Activated CD4-positive, alpha-beta T cell treated with anti-CD3 and anti-CD28 coated beads, Interleukin-2, amount 10 ng/mL, durations not matched to agents 24 days and 14 days (primary cell): ENCODE measurements at regions of chr6 and their contacts with region 1.

Region 1: DNA sequence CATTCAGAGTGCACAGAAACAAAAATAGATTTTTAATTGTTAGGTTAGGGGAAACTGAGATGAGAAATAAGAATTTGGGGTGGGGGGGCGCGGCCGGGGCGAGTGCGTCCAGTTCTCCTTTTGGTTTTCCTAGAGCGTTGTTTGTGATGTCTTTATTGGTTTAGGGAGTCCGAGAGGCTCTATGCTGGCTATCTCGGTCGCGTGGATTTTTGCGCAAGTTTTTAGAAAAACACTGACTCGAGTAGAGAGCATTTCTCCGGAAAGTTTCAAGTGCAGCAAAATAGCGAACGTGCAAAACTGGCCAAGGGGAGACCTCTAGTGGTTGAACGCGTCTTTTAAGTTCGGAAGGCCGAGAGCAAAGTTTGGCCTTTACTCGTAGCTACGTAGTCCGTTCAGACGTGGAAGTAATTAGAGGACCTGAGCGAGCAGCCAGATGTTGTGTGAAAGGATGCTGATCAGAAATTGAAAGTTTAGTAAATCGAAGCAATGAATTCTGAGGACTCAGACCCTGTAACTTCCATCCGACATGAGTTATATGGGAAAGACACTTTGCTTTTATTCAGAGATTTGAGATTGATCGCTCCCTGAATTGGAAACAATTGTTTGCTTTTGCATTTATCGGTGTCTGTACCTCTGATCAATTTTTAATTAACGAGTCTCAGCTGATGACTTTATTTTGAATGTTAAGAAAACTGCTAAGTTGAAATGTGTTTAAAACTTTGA is 2.7 kb downstream of the L3MBTL3 start:
- DNase-seq: peak; percentile 94
- H3K4me3 Mint-ChIP-seq: peak overlapping the region; percentile 95
- H3K27ac Mint-ChIP-seq: peak overlapping the region; percentile 93
- H3K4me1 Mint-ChIP-seq: peaks cover 17% of the 10 kb centered on the region
- H3K27me3 Mint-ChIP-seq: peaks cover 12% of the 10 kb centered on the region

Region 2: GRCh38 chr6:129490521-129491245 is 530.4 kb before region 1 on chr6:
- intact Hi-C with region 1: loop called (anchors 2 kb)
- DNase-seq: peak; percentile 91
- H3K4me3 Mint-ChIP-seq: peak overlapping the region; percentile 84
- H3K27ac Mint-ChIP-seq: peak overlapping the region; percentile 98
- H3K4me1 Mint-ChIP-seq: peaks cover 61% of the 10 kb centered on the region
- H3K27me3 Mint-ChIP-seq: no peaks in the 10 kb centered on the region

Region 3: GRCh38 chr6:129598244-129599187 is 422.6 kb before region 1 on chr6:
- intact Hi-C with region 1: loop called (anchors 2 kb)
- DNase-seq: peak; percentile 84
- H3K4me3 Mint-ChIP-seq: no peak overlapping the region
- H3K27ac Mint-ChIP-seq: no peak overlapping the region
- H3K4me1 Mint-ChIP-seq: peaks cover 1% of the 10 kb centered on the region
- H3K27me3 Mint-ChIP-seq: no peaks in the 10 kb centered on the region

Region 4: DNA sequence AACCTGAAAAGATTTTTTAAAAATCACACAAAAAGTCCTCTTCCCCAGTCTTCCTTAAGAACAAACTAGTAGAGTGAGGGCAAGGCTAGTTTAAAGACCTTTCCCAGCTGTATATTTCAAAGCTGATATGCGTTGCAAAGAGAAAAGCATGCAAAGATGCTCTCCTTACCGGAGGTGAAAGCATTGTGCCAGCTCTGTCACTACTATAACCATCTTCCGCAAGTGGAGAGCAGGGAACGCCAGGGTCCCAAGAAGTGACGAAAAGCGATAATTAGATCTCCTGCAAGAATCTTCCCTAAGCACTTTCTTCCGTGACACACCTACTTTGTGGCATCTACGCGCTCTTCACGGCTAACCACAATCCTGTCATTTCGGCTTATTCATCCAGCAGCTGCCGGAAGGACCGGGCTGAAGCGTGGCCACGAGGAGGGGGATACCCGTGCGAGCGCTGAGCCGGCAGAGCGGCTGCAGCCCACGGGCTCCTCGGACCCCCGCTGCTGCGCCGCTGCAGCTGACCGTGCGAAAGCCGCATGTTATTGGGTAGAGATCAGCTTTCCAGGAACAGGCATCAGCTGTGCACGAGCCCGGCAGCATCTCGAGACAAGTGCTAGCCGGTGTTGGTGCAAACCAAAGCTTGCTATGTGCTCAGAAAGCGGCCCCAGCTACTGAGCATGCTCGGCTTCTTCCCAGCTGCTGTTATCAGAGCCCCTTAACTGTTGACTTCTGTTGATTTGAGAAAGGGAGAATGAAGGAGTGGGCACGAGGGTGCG is 253.9 kb before region 1 on chr6:
- intact Hi-C with region 1: loop called (anchors 5 kb)
- DNase-seq: peak; percentile 89
- H3K4me3 Mint-ChIP-seq: peak overlapping the region; percentile 88
- H3K27ac Mint-ChIP-seq: peak overlapping the region; percentile 81
- H3K4me1 Mint-ChIP-seq: peaks cover 23% of the 10 kb centered on the region
- H3K27me3 Mint-ChIP-seq: peaks cover 65% of the 10 kb centered on the region

Region 5: GRCh38 chr6:129893640-129894039 is 127.4 kb before region 1 on chr6:
- intact Hi-C with region 1: loop called (anchors 1 kb)
- DNase-seq: no peak
- H3K4me3 Mint-ChIP-seq: no peak overlapping the region
- H3K27ac Mint-ChIP-seq: no peak overlapping the region
- H3K4me1 Mint-ChIP-seq: peaks cover 5% of the 10 kb centered on the region
- H3K27me3 Mint-ChIP-seq: peaks cover 3% of the 10 kb centered on the region

Region 6: GRCh38 chr6:129936329-129937165 is 84.5 kb before region 1 on chr6:
- intact Hi-C with region 1: loop called (anchors 1 kb)
- DNase-seq: peak; percentile 78
- H3K4me3 Mint-ChIP-seq: no peak overlapping the region
- H3K27ac Mint-ChIP-seq: no peak overlapping the region
- H3K4me1 Mint-ChIP-seq: no peaks in the 10 kb centered on the region
- H3K27me3 Mint-ChIP-seq: peaks cover 30% of the 10 kb centered on the region